ENCODE measurements at regions of chr6 and their contacts with region 1.

Region 1: DNA sequence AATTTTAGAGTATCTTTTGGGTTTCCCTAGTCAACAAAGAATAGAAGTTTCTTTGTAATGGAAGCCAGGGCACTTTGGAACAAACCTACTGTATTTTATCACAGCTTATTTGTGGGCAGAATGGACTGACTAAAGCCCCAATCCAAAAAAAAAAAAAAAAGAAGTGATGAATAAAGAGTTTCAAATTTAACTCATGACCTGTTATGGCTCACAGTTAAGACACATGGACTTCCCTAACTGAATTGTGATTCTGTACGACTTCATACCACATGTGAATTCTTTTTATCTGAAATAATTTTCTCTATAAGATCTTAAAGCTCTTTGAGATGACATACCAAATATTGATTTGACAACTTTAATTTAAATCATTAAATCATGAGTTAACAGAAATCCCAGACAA is 77.2 kb downstream of the FILIP1 start:
- DNase-seq: no peak
- H3K27ac ChIP-seq: no peak overlapping the region
- CTCF ChIP-seq: no peak

Region 2: DNA sequence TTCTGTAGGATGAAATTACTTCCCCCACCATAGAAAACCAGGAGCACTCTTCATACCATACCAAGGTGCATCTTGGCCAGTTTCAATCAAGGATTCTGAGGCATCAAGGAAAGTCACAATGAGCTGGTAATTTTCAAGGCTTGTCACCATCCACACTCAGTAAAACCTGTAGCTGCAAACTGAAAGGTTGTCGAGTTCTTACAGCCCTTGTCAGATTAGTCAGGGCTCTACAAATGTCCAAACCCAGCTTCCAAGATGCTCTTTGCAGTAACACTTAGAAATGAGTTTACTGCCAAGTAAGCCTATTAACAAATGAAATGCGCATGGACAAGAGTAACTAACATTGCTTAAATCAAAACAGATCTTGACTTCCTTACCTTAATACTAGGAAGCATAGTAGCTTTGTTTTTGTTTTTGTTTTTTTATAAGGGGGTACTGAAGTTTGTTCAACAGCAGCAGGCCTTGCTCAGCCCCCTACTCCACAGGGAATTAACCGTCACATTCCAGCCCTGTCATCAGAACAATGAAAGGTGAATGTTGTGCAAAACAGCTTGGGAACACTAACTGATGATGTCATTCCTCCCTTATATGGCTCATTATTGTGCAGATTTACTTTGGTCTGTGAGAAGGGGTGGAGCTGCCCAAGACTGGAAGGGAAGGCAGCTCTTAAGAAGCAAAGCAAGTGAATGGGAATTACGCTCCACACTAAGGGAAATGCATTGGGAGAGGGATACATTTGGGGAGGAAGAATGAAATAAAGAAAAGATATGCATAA is 82.0 kb before region 1 on chr6:
- CTCF ChIA-PET with region 1: no interaction called
- POLR2A ChIA-PET with region 1: no interaction called
- DNase-seq: no peak
- H3K27ac ChIP-seq: no peak overlapping the region
- CTCF ChIP-seq: no peak

Region 3: DNA sequence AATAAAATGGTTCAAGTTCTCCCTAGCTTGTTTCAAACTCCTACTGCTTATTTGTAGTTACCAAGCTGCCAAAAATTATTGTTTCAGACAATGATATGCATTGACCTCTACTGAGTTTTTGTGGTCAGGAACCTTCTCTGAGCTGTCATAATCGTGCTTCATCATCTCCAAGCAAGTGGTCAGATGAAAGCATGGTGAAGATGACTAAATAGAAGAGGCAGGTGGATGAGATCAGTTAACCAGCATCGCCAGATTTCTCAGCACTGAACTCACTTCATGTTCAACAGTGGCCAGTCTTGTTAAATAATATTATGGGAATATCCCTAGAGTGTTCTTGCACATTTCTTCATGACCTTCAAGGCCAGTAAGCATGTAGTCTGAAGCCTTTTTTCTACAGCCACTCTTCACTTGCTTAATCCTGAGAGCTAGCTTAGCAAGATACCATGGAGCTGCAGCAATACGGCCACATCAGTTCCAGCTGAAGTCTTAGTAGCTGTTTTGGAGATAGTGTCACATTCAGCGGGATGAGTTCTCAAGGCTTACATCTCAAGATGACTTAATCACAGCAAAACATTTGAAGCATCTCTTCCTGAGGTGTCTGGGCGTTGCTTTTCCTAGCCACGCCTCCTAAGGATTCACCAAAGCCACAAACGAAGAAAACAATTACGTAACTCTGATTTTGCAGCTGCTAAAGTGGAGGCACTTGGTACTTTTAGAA is 30.2 kb before region 1 on chr6:
- CTCF ChIA-PET with region 1: interaction called, 10 read pairs
- POLR2A ChIA-PET with region 1: no interaction called
- DNase-seq: no peak
- H3K27ac ChIP-seq: no peak overlapping the region
- CTCF ChIP-seq: no peak

Region 4: GRCh38 chr6:75516757-75517156 is 100.3 kb after region 1 on chr6:
- CTCF ChIA-PET with region 1: no interaction called
- POLR2A ChIA-PET with region 1: no interaction called
- DNase-seq: no peak
- H3K27ac ChIP-seq: no peak overlapping the region
- CTCF ChIP-seq: no peak